Activated naive CD4-positive, alpha-beta T cell treated with anti-CD3 and anti-CD28 coated beads for 36 hours (primary cell): ENCODE measurements at regions of chr7 and their contacts with region 1.

Region 1: DNA sequence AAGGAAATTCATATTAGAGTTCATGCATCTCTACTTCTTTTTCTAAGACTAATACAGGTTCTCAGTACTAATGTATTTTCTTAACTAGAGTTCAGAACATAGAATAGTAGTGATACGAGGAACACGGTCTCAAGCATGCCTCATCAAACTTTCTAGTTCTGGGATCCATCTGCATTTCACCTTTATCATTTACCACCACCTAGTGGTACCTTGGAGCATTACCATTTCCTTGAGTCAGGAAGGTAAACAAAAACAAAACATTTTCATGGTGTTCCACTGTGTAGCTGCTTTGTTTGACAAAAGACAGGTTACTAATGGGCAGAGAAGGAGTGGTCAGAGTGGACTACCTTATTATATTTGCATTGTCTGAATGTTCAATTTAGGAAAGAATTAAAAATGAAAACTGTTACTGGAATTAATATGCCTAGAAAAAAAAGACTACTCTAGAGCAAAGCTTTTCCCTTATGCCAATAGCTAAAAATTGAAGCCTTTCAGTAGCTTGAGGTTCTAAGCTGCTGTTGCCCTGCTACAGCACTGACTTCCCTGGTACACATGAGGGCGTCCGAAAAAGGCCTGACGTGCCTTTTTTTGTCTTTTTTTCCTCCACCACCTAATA is 44.5 kb downstream of the STARD3NL start:
- DNase-seq: peak; percentile 21
- H3K4me3 Mint-ChIP-seq: no peak overlapping the region
- H3K27ac Mint-ChIP-seq: no peak overlapping the region
- H3K4me1 Mint-ChIP-seq: peaks cover 2% of the 10 kb centered on the region
- H3K27me3 Mint-ChIP-seq: no peaks in the 10 kb centered on the region

Region 2: GRCh38 chr7:37916673-37917660 is 305.6 kb before region 1 on chr7 and contains the start of gene SFRP4:
- CTCF ChIA-PET with region 1: interaction called, 4 read pairs
- intact Hi-C with region 1: loop called (anchors 5 kb)
- DNase-seq: peak; percentile 17
- H3K4me3 Mint-ChIP-seq: peak within 1 kb of the TSS; percentile 22
- H3K27ac Mint-ChIP-seq: no peak within 1 kb of the TSS
- H3K4me1 Mint-ChIP-seq: peaks cover 14% of the 10 kb centered on the region
- H3K27me3 Mint-ChIP-seq: peaks cover 58% of the 10 kb centered on the region
- total RNA-seq, gene SFRP4: not detected

Region 3: DNA sequence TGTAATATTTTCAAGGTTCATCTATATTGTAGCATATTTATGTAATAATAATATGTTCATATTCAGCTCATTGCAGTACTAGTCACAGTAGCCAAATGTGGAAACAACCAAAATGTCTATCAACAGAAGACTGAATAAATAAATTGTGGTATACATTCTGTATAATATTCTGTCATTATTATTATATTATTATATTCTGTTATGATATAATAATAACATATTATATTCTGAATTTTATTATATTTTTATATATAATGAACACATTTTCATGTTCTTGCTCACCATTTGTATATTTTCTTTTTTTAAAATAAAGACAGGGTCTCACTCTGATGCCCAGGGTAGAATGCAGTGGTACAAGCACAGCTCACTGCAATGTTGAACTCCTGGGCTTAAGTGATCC is 135.7 kb before region 1 on chr7:
- CTCF ChIA-PET with region 1: no interaction called
- intact Hi-C with region 1: no loop called
- DNase-seq: no peak
- H3K4me3 Mint-ChIP-seq: no peak overlapping the region
- H3K27ac Mint-ChIP-seq: no peak overlapping the region
- H3K4me1 Mint-ChIP-seq: no peaks in the 10 kb centered on the region
- H3K27me3 Mint-ChIP-seq: peaks cover 17% of the 10 kb centered on the region

Region 4: DNA sequence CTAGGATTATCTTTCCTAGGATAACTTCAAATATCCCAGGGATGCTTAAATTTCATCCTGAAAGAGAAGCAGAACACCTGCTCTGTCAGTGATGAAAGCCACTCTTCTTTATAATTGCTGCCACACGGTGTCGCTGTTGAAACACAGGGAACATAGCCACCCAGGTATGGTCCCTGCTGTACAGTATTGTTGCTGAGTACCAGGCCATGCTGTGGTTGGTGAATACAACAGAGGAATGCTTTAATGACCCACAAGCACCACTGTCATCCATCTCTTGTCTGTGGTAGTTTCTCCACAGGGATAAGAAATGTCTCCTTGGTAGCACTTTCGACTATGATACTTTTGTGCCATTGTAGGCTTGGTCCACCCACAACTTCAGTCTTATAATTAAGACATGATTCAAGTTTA is 115.1 kb before region 1 on chr7:
- CTCF ChIA-PET with region 1: interaction called, 81 read pairs
- intact Hi-C with region 1: loop called (anchors 1 kb)
- DNase-seq: peak; percentile 84
- H3K4me3 Mint-ChIP-seq: no peak overlapping the region
- H3K27ac Mint-ChIP-seq: no peak overlapping the region
- H3K4me1 Mint-ChIP-seq: no peaks in the 10 kb centered on the region
- H3K27me3 Mint-ChIP-seq: peaks cover 8% of the 10 kb centered on the region

Region 5: GRCh38 chr7:38318803-38319416 is 96.3 kb after region 1 on chr7:
- CTCF ChIA-PET with region 1: interaction called, 4 read pairs
- intact Hi-C with region 1: loop called (anchors 1 kb)
- DNase-seq: peak; percentile 33
- H3K4me3 Mint-ChIP-seq: peak overlapping the region; percentile 27
- H3K27ac Mint-ChIP-seq: no peak overlapping the region
- H3K4me1 Mint-ChIP-seq: peaks cover 26% of the 10 kb centered on the region
- H3K27me3 Mint-ChIP-seq: no peaks in the 10 kb centered on the region